HepG2 (cell line): ENCODE measurements at regions of chr4 and their contacts with region 1.

Region 1: DNA sequence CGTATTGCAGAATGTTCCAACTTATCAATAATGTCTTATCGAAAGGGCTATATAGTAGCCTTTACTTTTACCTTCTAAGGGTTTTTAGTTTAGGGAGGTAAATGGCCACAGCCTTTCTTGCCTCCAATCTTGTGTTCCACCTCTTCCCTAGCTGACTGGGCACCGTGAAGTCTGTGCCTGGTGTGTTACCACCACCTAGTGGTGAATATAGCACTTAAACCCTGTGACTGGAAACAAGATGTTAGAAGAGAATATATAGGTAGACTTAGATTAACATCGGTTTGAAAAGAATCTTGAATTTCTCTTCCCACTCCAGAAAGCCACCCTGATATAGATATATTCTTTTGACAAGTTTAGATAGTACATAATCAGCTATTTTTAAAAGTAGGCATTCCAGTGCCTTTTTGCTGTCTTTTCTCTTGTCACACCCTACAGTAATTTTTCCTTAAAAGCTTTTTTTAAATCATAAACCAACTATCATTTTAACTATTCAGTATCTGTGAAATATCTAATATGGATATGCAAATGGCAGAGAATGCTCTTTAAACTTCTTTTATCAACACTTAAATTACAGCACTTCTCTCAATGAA is 27.8 kb upstream of the ADH7 start:
- DNase-seq: peak; percentile 66
- ATAC-seq: peak; percentile 96
- H3K4me3 ChIP-seq: no peak overlapping the region
- H3K27ac ChIP-seq: no peak overlapping the region
- H3K4me1 ChIP-seq: peaks cover 9% of the 10 kb centered on the region
- H3K27me3 ChIP-seq: no peaks in the 10 kb centered on the region; a peak in 1 of 5 replicates
- CTCF ChIP-seq: peak; percentile 88
- EP300 ChIP-seq: no peak
- POLR2A ChIP-seq: no peak
- RAD21 ChIP-seq: peak; percentile 86

Region 2: DNA sequence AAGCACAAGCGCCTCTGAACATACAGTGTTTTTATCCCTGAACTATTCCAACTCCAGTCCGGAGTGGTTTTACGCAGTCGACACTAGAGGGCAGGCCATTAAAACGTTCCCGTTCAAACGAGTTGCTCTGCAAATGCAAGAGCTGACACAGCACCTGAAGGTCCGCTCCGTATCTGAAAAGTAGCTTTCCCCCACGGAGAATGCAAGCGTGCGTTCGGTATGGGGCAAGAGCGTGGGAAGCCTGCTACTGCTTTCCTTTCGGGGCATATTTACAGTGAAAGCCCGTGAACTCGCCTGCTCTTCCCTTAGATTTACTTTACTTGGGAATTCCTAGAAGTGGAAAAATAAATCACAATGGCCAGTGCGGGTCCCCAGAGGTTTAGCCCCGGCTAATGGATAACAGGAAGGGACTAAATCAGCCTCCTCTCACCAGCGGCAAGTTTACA is 995.3 kb before region 1 on chr4:
- CTCF ChIA-PET with region 1: interaction called, 12 read pairs
- POLR2A ChIA-PET with region 1: no interaction called
- in situ Hi-C with region 1: loop called (anchors 25 kb)
- intact Hi-C with region 1: loop called (anchors 2 kb)
- DNase-seq: peak; percentile 78
- ATAC-seq: peak; percentile 99
- H3K4me3 ChIP-seq: peak overlapping the region in 2 of 3 experiments; percentile 35 to 56; a peak in 5 of 6 replicates
- H3K27ac ChIP-seq: no peak overlapping the region
- H3K4me1 ChIP-seq: no peaks in the 10 kb centered on the region
- H3K27me3 ChIP-seq: peaks cover 2 to 6% of the 10 kb centered on the region in 2 experiments; a peak in 1 of 5 replicates
- CTCF ChIP-seq: peak; percentile 90
- EP300 ChIP-seq: no peak
- POLR2A ChIP-seq: no peak
- RAD21 ChIP-seq: peak; percentile 68

Region 3: DNA sequence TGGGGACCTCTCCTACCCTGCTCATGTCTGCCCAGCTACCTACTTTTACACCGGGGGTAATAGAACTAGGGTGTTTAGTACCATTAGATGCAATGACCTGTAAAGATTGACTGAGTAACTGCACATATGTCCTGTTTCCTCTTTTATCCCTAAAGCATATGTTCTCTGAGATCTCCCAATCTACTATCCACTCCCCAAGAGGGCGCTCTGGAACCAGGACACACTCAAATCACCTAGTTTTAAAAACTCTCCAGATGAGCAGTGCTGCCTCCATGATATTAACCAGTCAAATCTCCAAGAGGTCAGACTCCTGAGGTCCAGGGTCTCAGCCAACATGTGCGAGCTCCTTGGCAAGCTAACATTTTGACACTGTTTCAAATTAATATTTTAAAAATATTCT is 717.6 kb before region 1 on chr4:
- CTCF ChIA-PET with region 1: no interaction called
- POLR2A ChIA-PET with region 1: no interaction called
- in situ Hi-C with region 1: no loop called
- intact Hi-C with region 1: loop called (anchors 1 kb)
- DNase-seq: peak; percentile 23
- ATAC-seq: peak; percentile 48; the same call in 1 of the 3 replicates
- H3K4me3 ChIP-seq: no peak overlapping the region
- H3K27ac ChIP-seq: no peak overlapping the region
- H3K4me1 ChIP-seq: no peaks in the 10 kb centered on the region
- H3K27me3 ChIP-seq: no peaks in the 10 kb centered on the region
- CTCF ChIP-seq: peak; percentile 41
- EP300 ChIP-seq: no peak
- POLR2A ChIP-seq: no peak
- RAD21 ChIP-seq: no peak

Region 4: GRCh38 chr4:98939892-98940298 is 523.1 kb before region 1 on chr4:
- CTCF ChIA-PET with region 1: interaction called, 5 read pairs
- POLR2A ChIA-PET with region 1: no interaction called
- in situ Hi-C with region 1: no loop called
- intact Hi-C with region 1: loop called (anchors 1 kb)
- DNase-seq: peak; percentile 35
- ATAC-seq: peak; percentile 73
- H3K4me3 ChIP-seq: no peak overlapping the region
- H3K27ac ChIP-seq: no peak overlapping the region
- H3K4me1 ChIP-seq: peaks cover 36% of the 10 kb centered on the region
- H3K27me3 ChIP-seq: no peaks in the 10 kb centered on the region
- CTCF ChIP-seq: peak; percentile 62
- EP300 ChIP-seq: no peak
- POLR2A ChIP-seq: no peak
- RAD21 ChIP-seq: no peak

Region 5: GRCh38 chr4:99117876-99118693 is 344.9 kb before region 1 on chr4:
- CTCF ChIA-PET with region 1: interaction called, 3 read pairs
- POLR2A ChIA-PET with region 1: no interaction called
- in situ Hi-C with region 1: no loop called
- intact Hi-C with region 1: loop called (anchors 1 kb)
- DNase-seq: peak; percentile 7
- ATAC-seq: peak; percentile 42; the same call in 2 of the 3 replicates
- H3K4me3 ChIP-seq: no peak overlapping the region
- H3K27ac ChIP-seq: peak overlapping the region; percentile 43
- H3K4me1 ChIP-seq: peaks cover 19% of the 10 kb centered on the region
- H3K27me3 ChIP-seq: no peaks in the 10 kb centered on the region
- CTCF ChIP-seq: peak; percentile 14; the same call in 1 of the 2 replicates
- EP300 ChIP-seq: no peak
- POLR2A ChIP-seq: no peak
- RAD21 ChIP-seq: no peak